Mammary epithelial cell (primary cell): ENCODE measurements at regions of chr13 and their contacts with region 1.

Region 1: GRCh38 chr13:72963762-72964161 is 95.0 kb upstream of the KLF5 start:
- DNase-seq: no peak
- H3K4me3 ChIP-seq: no peak overlapping the region
- H3K27ac ChIP-seq: no peak overlapping the region
- H3K4me1 ChIP-seq: peaks cover 8% of the 10 kb centered on the region
- H3K27me3 ChIP-seq: no peaks in the 10 kb centered on the region
- CTCF ChIP-seq: no peak

Region 2: DNA sequence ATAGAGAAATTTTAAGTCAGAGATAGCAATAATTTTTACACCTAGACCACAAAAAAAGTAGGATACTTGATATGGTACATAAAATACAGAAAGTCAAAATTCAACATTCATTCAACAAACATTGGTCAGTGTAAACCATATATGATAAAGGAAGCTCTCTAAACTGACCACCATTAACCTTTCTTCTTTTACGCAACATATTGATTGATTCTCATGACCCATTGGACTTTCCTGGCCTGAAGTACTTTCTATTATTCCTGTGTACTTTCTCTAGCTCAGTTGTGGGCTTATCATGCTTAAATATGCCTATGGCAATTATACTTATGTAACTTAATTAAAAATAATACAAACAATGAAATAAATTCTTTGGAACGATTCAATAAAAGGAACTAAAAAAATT is 171.1 kb before region 1 on chr13:
- CTCF ChIA-PET with region 1: interaction called, 11 read pairs
- dilution Hi-C with region 1: no loop called
- in situ Hi-C with region 1: no loop called
- intact Hi-C with region 1: no loop called
- DNase-seq: no peak
- H3K4me3 ChIP-seq: no peak overlapping the region
- H3K27ac ChIP-seq: no peak overlapping the region
- H3K4me1 ChIP-seq: no peaks in the 10 kb centered on the region
- H3K27me3 ChIP-seq: no peaks in the 10 kb centered on the region
- CTCF ChIP-seq: no peak

Region 3: GRCh38 chr13:72826446-72826845 is 137.3 kb before region 1 on chr13:
- CTCF ChIA-PET with region 1: no interaction called
- dilution Hi-C with region 1: no loop called
- in situ Hi-C with region 1: no loop called
- intact Hi-C with region 1: no loop called
- DNase-seq: no peak
- H3K4me3 ChIP-seq: no peak overlapping the region
- H3K27ac ChIP-seq: no peak overlapping the region
- H3K4me1 ChIP-seq: no peaks in the 10 kb centered on the region
- H3K27me3 ChIP-seq: no peaks in the 10 kb centered on the region
- CTCF ChIP-seq: no peak